ENCODE measurements at regions of chr15 and their contacts with region 1.

Region 1: DNA sequence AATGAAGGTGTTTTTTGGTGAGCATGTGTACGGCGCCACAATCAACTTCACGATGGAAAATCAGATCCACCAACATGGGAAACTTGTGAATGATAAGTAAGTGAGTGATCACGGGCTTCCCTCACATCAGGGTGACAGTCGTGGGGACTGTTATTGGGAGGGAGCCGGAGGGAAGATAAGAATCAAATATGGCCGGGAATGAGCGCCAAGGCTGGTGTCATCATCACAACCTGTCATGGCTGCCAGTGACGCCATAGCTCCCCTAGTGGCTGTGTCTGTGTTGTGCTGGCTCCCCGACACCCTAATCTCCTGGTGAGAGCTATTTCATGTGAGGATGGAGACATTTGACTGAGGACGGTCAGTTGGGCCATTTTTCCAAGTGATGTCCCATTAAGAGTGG is 168.5 kb downstream of the SV2B start:
- DNase-seq: no peak
- H3K4me3 ChIP-seq: no peak overlapping the region
- H3K27ac ChIP-seq: no peak overlapping the region
- H3K4me1 ChIP-seq: no peaks in the 10 kb centered on the region
- H3K27me3 ChIP-seq: peaks cover 0 to 9% of the 10 kb centered on the region in 2 donors
- CTCF ChIP-seq: no peak
- POLR2A ChIP-seq: no peak

Region 2: GRCh38 chr15:90954712-90955671 is 313.5 kb before region 1 on chr15 and contains the start of gene RCCD1:
- intact Hi-C with region 1: loop called (anchors 5 kb)
- DNase-seq: peak; percentile 94 to 95
- H3K4me3 ChIP-seq: peak within 1 kb of the TSS; percentile 61 to 80 (median 79)
- H3K27ac ChIP-seq: peak within 1 kb of the TSS; percentile 91
- H3K4me1 ChIP-seq: peaks cover 3 to 8% of the 10 kb centered on the region in 2 donors
- H3K27me3 ChIP-seq: no peaks in the 10 kb centered on the region
- CTCF ChIP-seq: no peak
- POLR2A ChIP-seq: peak; percentile 31
- total RNA-seq, gene RCCD1: 5.3 to 9.8 (median 7.9) TPM

Measured in breast epithelium (tissue), 4 donors.